Heart left ventricle (tissue), 16 donors: ENCODE measurements at regions of chr17 and their contacts with region 1.

Region 1: GRCh38 chr17:63406689-63407330 is 39.3 kb downstream of the CYB561 start:
- DNase-seq: peak in 4 of 5 donors; percentile 65 to 77 (median 68)
- ATAC-seq: peak; percentile 65 to 89 (median 84)
- H3K4me3 ChIP-seq: no peak overlapping the region
- H3K27ac ChIP-seq: no peak overlapping the region
- H3K4me1 ChIP-seq: peaks cover 0 to 26% (median 2%) of the 10 kb centered on the region in 12 donors
- H3K27me3 ChIP-seq: no peaks in the 10 kb centered on the region
- CTCF ChIP-seq: peak; percentile 74 to 93 (median 84)
- POLR2A ChIP-seq: no peak

Region 2: GRCh38 chr17:62703775-62704378 is 702.9 kb before region 1 on chr17:
- intact Hi-C with region 1: loop called in 8 of 10 experiments (anchors 2 to 10 kb)
- DNase-seq: peak; percentile 77 to 91 (median 79)
- ATAC-seq: peak; percentile 83 to 95 (median 88)
- H3K4me3 ChIP-seq: peak overlapping the region; percentile 57 to 91 (median 74)
- H3K27ac ChIP-seq: peak overlapping the region; percentile 70 to 93 (median 78)
- H3K4me1 ChIP-seq: peaks cover 0 to 36% (median 23%) of the 10 kb centered on the region in 12 donors
- H3K27me3 ChIP-seq: peaks cover 0 to 13% (median 0%) of the 10 kb centered on the region in 9 donors
- CTCF ChIP-seq: peak; percentile 69 to 93 (median 86)
- POLR2A ChIP-seq: no peak

Region 3: DNA sequence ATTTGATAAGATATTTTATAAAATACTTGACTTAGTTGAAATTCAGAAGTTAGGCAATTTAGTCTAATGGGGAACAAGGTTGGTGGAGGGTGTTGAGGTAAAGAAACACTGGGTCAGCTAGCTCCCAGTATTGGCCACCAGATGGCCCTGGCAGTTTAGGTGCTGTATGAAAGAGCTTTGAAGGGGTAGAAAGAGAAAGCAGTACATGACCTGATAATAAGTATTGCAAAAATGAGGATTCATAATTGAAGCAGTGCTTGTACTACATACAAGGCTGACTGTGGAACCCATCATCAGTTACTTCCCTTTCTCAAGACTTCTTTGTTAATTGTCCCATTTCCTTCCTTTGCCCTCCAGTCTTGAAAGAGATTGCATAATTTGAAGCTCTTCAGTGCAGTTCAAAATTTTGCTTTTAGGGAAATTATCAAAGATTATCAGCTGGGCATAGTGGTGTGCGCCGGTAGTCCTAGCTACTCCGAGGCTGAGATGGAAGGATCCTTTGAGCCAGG is 411.4 kb before region 1 on chr17:
- intact Hi-C with region 1: loop called in 8 of 10 experiments (anchors 2 to 10 kb)
- DNase-seq: no peak
- ATAC-seq: peak in 3 of 4 donors; percentile 65 to 69 (median 67)
- H3K4me3 ChIP-seq: no peak overlapping the region
- H3K27ac ChIP-seq: peak overlapping the region in 1 of 12 donors; percentile 24
- H3K4me1 ChIP-seq: peaks cover 0 to 20% (median 2%) of the 10 kb centered on the region in 12 donors
- H3K27me3 ChIP-seq: no peaks in the 10 kb centered on the region
- CTCF ChIP-seq: peak in 11 of 12 donors; percentile 18 to 66 (median 43)
- POLR2A ChIP-seq: no peak

Region 4: DNA sequence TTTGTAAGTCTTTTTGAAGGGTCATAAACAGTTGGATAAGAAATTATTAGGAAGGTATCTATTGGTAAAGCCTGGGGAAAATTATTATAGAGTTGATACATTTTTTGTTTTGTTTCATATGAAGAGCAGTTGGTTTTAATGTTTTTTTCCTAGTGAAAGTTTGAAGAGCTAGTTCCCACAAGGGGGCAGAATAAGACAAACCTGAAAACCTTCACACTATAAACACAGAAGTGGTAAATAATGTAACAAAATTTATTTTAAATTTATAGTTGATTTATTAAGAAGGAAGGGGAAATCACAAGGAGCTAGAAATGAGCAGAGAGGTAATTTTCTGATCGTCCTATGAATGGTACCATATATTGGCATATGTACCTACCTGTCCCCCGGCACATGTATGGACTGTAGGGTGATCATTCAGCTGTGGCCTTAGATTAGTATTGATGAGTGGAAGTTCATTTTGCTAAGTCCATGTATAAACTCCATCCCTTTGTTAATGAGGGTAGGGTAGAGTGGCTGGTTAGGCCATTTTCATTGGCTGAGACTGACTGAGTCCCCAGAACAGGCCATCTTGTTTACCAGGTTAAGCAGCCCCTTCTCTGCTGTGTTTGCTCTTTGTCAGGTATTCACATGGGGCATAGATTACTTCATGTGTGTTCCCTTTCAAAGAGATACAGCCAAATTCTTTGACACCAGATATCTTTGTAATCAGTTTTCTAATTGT is 324.4 kb before region 1 on chr17:
- intact Hi-C with region 1: loop called in 9 of 10 experiments (anchors 2 to 10 kb)
- DNase-seq: no peak
- ATAC-seq: no peak
- H3K4me3 ChIP-seq: no peak overlapping the region
- H3K27ac ChIP-seq: no peak overlapping the region
- H3K4me1 ChIP-seq: no peaks in the 10 kb centered on the region
- H3K27me3 ChIP-seq: no peaks in the 10 kb centered on the region
- CTCF ChIP-seq: peak in 10 of 12 donors; percentile 7 to 58 (median 42)
- POLR2A ChIP-seq: no peak

Region 5: DNA sequence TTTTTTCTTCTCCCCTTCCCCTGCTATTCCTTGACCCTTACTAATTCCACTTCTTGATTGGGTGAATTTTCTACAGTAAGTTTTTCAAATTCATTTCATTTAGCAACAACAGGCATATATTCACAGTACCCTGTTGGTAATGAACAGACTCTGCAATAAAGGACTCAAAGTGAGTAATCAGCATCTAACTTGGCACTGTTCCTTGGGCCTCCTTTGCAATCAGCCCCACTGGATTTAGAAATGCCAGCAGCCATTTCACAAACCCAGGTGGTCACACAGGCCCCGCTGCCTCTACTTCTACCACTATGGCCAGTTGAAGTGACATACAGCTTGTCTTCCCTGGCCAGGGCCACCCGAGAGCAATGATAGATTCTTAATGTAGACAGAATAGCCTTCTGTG is 74.5 kb before region 1 on chr17:
- intact Hi-C with region 1: no loop called
- DNase-seq: no peak
- ATAC-seq: no peak
- H3K4me3 ChIP-seq: no peak overlapping the region
- H3K27ac ChIP-seq: no peak overlapping the region
- H3K4me1 ChIP-seq: peaks cover 0 to 22% (median 0%) of the 10 kb centered on the region in 12 donors
- H3K27me3 ChIP-seq: no peaks in the 10 kb centered on the region
- CTCF ChIP-seq: no peak
- POLR2A ChIP-seq: no peak

Region 6: DNA sequence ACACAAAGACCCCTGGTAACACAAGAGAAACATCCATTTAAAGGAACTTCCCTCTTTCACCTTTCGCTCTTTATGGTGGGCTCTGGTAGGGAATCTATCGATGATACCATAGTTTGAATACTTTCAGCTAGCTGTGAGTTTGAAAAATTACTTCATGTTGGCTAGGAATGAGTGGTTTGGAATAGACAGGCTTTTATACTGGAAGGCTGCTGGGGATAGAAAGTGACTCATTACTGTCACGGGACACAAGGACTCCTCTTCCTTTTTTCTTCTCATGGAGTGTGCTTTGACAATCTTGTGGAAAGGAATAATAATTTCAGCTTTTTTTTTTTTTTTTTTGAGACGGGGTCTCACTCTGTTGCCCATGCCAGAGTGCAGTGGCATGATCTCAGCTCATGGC is 37.6 kb before region 1 on chr17:
- intact Hi-C with region 1: no loop called
- DNase-seq: no peak
- ATAC-seq: peak in 3 of 4 donors; percentile 39 to 63 (median 52)
- H3K4me3 ChIP-seq: no peak overlapping the region
- H3K27ac ChIP-seq: no peak overlapping the region
- H3K4me1 ChIP-seq: peaks cover 0 to 25% (median 6%) of the 10 kb centered on the region in 12 donors
- H3K27me3 ChIP-seq: no peaks in the 10 kb centered on the region
- CTCF ChIP-seq: no peak
- POLR2A ChIP-seq: no peak